Panc1 (cell line): ENCODE measurements at regions of chr17 and their contacts with region 1.

Region 1: DNA sequence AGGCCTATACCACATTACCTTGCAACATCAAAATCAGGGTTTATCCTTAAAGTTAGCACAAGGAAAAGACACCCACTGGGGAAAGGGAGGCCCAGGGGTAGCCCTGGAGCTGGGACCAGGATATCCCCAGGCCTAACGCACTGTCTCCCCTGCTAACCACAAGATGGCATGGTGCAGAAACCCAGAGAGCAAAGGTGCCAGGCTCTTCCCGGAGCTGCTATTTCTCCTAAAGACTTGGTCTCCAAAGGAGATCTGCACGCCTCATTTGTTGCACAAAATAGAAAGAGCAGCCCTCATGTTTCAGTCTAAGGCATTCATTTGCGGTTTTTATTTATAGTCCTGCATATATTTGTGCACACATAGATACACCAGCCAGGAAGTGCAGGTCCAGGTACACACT is 408.6 kb downstream of the SOX9 start:
- DNase-seq: no peak
- ATAC-seq: peak; percentile 60
- H3K4me3 ChIP-seq: no peak overlapping the region
- H3K27ac ChIP-seq: peak overlapping the region; percentile 77
- H3K4me1 ChIP-seq: peaks cover 74% of the 10 kb centered on the region
- H3K27me3 ChIP-seq: no peaks in the 10 kb centered on the region
- CTCF ChIP-seq: no peak

Region 2: GRCh38 chr17:72338847-72339790 is 190.3 kb before region 1 on chr17:
- CTCF ChIA-PET with region 1: no interaction called
- POLR2A ChIA-PET with region 1: no interaction called
- in situ Hi-C with region 1: no loop called
- intact Hi-C with region 1: no loop called
- DNase-seq: peak; percentile 79
- ATAC-seq: peak; percentile 93
- H3K4me3 ChIP-seq: peak overlapping the region in 1 of 2 experiments; percentile 8; a peak in 1 of 4 replicates
- H3K27ac ChIP-seq: peak overlapping the region; percentile 75
- H3K4me1 ChIP-seq: peaks cover 23% of the 10 kb centered on the region
- H3K27me3 ChIP-seq: no peaks in the 10 kb centered on the region
- CTCF ChIP-seq: no peak

Region 3: DNA sequence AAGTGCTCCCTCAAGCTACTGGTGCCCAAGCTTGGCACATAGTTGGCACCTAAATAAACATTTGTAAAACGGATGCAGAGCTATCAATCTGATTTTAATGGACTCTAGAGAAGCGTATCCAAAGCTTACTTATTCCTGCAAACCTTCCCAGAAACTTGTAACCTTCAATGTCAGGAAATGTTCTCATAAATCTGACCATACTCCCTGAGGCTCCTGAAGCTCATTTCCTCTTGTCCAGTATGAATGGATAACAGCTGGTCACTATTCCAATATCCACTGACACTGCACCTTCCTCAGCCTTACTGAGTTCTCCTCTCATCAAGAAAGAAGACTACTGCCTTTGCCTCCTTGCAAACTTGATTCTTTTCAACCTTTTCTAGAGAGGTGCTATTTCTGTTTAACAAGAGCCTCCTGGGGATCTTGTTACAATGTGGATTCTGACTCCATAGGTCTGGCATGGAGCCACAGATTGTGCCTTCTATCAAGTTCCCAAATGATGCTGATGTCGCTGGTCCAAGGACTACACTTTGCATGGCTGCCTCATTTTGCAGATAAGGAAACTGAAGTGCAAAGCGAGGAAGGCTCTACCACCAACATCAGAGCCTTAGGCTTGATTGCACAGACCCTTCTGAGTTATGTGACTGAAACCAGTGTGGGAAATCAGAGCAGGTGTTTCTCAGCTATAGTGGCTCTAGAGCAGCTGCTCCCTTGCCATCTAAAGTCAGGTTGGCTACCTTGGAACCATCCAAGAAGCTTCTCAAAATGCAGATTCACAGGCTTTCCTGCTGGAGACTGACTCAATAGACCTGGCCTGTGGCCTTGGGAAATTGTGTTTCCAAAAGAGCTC is 30.8 kb before region 1 on chr17:
- CTCF ChIA-PET with region 1: no interaction called
- POLR2A ChIA-PET with region 1: no interaction called
- in situ Hi-C with region 1: no loop called
- intact Hi-C with region 1: no loop called
- DNase-seq: no peak
- ATAC-seq: no peak
- H3K4me3 ChIP-seq: no peak overlapping the region
- H3K27ac ChIP-seq: peak overlapping the region; percentile 79
- H3K4me1 ChIP-seq: peaks cover 79% of the 10 kb centered on the region
- H3K27me3 ChIP-seq: no peaks in the 10 kb centered on the region
- CTCF ChIP-seq: no peak

Region 4: GRCh38 chr17:72552673-72553402 is 23.5 kb after region 1 on chr17:
- CTCF ChIA-PET with region 1: no interaction called
- POLR2A ChIA-PET with region 1: no interaction called
- in situ Hi-C with region 1: no loop called
- intact Hi-C with region 1: no loop called
- DNase-seq: no peak
- ATAC-seq: no peak
- H3K4me3 ChIP-seq: no peak overlapping the region
- H3K27ac ChIP-seq: no peak overlapping the region
- H3K4me1 ChIP-seq: peaks cover 23% of the 10 kb centered on the region
- H3K27me3 ChIP-seq: no peaks in the 10 kb centered on the region
- CTCF ChIP-seq: no peak

Region 5: GRCh38 chr17:72598695-72599094 is 69.3 kb after region 1 on chr17:
- CTCF ChIA-PET with region 1: no interaction called
- POLR2A ChIA-PET with region 1: interaction called, 11 read pairs
- in situ Hi-C with region 1: no loop called
- intact Hi-C with region 1: no loop called
- DNase-seq: no peak
- ATAC-seq: no peak
- H3K4me3 ChIP-seq: no peak overlapping the region
- H3K27ac ChIP-seq: no peak overlapping the region
- H3K4me1 ChIP-seq: peaks cover 36% of the 10 kb centered on the region
- H3K27me3 ChIP-seq: no peaks in the 10 kb centered on the region
- CTCF ChIP-seq: no peak